Lower leg skin (tissue), 4 donors: ENCODE measurements at regions of chr15 and their contacts with region 1.

Region 1: DNA sequence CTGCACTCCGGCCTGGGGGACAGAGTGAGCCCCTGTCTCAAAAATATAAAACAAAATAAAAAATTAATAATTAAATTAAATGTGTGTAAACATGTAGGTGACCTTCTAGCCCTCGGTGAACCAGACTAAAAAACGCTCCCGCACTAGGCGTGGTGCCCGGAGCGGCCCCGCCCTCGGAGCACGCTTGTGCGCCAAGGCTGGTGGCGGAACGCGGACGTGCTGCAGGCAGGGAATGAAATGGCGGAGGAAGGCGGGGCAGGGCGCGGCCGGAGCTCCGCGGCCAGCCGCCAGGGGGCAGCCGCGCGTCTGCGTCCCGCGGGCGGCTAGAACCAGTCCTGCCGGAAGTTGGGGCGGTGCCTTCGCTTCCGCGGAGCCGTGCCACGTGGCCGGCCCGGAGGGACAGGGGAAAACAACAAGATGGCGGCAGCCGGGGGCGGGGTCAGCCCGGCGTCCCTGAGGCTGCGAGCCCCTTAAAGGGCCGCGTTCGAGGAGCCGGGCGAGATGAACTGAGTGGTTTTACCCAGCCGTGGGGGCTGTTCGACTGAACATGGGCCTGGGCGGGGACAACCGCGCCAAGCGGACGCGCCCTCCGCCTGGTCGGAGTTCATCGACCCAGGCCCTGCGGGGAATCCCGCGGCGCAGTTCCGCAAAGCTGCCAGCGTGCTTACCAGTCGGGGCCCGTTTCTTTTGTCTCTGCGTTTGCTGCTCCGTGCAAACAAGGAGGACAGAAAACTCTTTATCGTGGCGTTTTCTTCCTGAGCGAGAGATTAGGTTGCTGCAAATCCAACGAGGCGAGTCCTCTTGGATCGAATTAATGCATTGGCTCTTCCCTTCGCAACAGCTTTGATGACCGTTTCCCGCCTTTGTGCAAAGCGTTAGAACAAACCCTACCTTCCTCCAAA is 90.9 kb upstream of the CHD2 start:
- DNase-seq: peak; percentile 98 to 100
- H3K4me3 ChIP-seq: peak overlapping the region; percentile 37
- CTCF ChIP-seq: peak in 2 of 3 donors; percentile 8 to 84
- POLR2A ChIP-seq: peak in 1 of 2 donors; percentile 4

Region 2: DNA sequence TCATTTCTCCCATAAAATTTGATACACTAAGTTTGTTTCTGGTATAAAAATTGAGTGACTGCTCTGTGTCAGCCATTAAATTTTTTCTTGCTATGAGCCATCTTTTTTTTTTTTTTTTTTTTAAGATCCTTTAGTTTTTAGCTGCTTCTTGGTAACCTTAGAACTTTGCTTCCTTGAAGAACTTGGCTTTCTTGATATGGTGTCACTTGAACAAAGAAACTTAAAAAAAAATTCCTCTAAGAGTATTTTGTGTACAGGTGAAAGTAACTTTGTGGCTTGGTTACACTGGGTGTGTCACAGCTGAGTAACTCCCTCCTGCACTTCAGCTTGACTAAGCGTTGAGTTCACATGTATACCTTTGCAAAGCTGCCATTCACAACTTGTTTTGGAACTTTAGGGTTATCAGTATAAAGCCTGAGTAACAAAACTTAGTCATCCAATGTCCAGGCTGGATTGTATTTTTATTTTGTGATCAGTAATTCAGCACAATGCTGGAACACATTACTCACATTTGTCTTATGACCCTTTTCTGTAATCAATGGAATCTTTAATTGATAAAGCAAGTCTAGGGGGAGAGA is 97.4 kb after region 1 on chr15:
- intact Hi-C with region 1: loop called (anchors 5 kb)
- DNase-seq: no peak
- H3K4me3 ChIP-seq: no peak overlapping the region
- CTCF ChIP-seq: no peak
- POLR2A ChIP-seq: no peak